Endothelial cell of umbilical vein (primary cell): ENCODE measurements at regions of chr2 and their contacts with region 1.

Region 1: GRCh38 chr2:12847694-12848575 is 131.2 kb downstream of the TRIB2 start:
- DNase-seq: no peak
- H3K4me3 ChIP-seq: no peak overlapping the region
- H3K27ac ChIP-seq: no peak overlapping the region
- H3K4me1 ChIP-seq: no peaks in the 10 kb centered on the region
- H3K27me3 ChIP-seq: no peaks in the 10 kb centered on the region
- CTCF ChIP-seq: no peak
- POLR2A ChIP-seq: no peak

Region 2: DNA sequence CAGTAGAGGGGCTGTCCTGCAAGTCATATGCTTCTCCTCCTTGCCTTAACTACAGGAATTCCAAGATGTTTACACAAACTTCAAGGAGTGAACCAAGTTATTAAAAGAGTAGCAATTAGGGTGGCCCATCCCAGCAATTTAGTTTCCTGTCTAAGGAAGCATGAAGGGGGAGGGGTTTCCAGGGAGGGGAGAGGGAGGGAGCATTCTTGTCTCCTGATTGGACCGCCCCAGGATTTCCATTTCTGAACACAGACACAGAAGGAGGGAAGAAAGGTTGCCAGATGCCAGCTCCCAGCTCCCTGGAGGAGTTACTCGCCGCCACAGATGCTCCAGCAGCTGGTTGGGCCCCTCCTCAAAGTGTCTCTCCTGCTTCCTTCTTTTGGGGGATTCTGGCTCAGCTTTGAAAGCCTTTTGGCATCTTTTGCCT is 23.6 kb before region 1 on chr2:
- CTCF ChIA-PET with region 1: no interaction called
- POLR2A ChIA-PET with region 1: no interaction called
- dilution Hi-C with region 1: no loop called
- intact Hi-C with region 1: loop called (anchors 1 kb)
- DNase-seq: peak; percentile 32
- H3K4me3 ChIP-seq: no peak overlapping the region
- H3K27ac ChIP-seq: no peak overlapping the region
- H3K4me1 ChIP-seq: peaks cover 24% of the 10 kb centered on the region
- H3K27me3 ChIP-seq: no peaks in the 10 kb centered on the region
- CTCF ChIP-seq: no peak
- POLR2A ChIP-seq: no peak

Region 3: DNA sequence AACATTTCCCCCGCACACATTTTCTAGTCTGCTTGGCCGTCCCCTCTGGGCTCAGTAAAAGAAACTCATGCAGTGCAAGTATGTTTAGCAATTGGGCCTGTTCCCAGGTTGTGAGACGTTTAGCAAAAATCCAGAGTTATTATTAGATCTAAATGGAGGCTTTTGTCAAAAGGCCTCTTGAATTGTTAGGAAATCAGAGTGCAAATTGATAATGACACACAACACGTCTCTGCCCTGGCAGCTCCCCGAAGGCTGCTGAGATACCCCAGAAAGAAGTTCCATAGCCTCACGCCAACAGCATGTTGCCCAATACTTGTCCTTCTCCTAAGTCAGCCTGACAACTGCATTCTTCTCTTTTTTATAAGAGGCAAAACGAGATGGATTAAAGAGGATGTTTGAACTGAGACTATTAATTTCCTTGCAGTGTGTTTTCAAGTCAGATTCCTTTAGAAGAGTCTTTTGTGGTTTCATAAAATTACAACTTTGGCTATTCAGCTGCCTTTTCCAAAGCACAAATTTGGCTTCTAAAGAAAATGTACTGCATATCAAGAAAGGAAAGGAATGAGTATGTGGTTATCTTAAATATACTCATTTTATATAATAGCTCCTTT is 71.0 kb after region 1 on chr2:
- CTCF ChIA-PET with region 1: no interaction called
- POLR2A ChIA-PET with region 1: no interaction called
- dilution Hi-C with region 1: no loop called
- intact Hi-C with region 1: no loop called
- DNase-seq: no peak
- H3K4me3 ChIP-seq: no peak overlapping the region
- H3K27ac ChIP-seq: no peak overlapping the region
- H3K4me1 ChIP-seq: no peaks in the 10 kb centered on the region
- H3K27me3 ChIP-seq: no peaks in the 10 kb centered on the region
- CTCF ChIP-seq: no peak
- POLR2A ChIP-seq: no peak